H1 (cell line): ENCODE measurements at regions of chr11 and their contacts with region 1.

Region 1: DNA sequence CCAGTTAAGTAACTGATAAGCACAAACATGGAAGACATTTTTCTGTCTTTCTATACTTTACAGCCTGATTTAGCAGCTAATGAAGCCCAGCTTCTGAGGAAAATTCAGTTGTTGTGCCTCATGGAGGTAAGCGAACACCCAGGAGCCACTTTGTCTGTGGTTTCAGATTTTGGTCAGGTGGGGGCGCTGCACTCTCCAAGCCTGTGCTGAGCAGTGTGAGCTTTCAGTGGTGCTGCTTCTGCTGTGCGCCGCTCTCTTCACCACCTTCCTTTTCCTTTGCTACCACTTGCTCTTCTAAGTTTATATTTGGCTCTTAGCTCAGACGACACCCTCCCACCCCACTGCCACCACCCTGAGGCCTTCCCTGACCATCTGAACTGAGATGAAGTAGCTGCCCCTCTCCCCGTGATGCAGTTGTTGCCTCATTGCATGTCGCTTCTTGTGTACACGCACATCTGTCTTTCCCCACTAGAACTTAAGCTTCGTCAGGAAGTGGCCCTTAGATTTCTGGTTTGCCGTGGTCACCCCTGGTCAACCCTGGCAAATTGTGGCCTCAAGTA is 14.0 kb downstream of the PSMD13 start:
- DNase-seq: peak; percentile 51 to 94
- H3K4me3 ChIP-seq: no peak overlapping the region
- H3K27ac ChIP-seq: no peak overlapping the region
- H3K4me1 ChIP-seq: no peaks in the 10 kb centered on the region
- H3K27me3 ChIP-seq: no peaks in the 10 kb centered on the region; a peak in 1 of 7 replicates
- CTCF ChIP-seq: peak; percentile 82 to 94 (median 85)
- EP300 ChIP-seq: no peak
- POLR2A ChIP-seq: no peak
- RAD21 ChIP-seq: peak; percentile 86 to 88

Region 2: DNA sequence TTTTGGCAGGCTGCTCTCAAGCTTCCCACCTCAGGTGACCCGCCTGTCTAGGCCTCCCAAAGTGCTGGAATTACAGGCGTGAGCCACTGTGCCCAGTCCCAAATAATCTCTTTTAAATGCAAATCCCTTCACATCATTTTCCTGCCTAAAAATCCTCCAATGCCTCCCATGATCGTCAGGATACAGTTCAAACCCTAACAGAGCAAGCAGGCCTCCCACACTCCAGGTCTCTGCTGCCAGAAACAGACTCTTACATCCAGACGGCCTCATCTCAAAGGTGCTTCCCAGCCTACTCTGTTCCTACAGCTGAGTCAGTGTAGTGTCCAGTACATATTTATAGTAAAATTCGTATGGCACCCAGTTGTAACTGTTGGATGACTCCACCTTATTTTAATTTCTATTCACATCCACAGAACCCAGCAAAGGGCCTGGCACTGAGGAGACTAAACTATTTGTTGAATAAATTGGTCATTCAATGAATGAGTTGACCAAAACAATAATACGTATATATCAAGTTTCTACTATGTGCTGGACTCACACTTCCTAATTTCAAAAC is 22.9 kb before region 1 on chr11:
- CTCF ChIA-PET with region 1: interaction called, 18 read pairs
- POLR2A ChIA-PET with region 1: no interaction called
- DNase-seq: no peak
- H3K4me3 ChIP-seq: no peak overlapping the region
- H3K27ac ChIP-seq: no peak overlapping the region
- H3K4me1 ChIP-seq: no peaks in the 10 kb centered on the region
- H3K27me3 ChIP-seq: no peaks in the 10 kb centered on the region
- CTCF ChIP-seq: no peak
- EP300 ChIP-seq: no peak
- POLR2A ChIP-seq: no peak
- RAD21 ChIP-seq: no peak

Region 3: GRCh38 chr11:269146-269890 is 18.5 kb after region 1 on chr11:
- CTCF ChIA-PET with region 1: interaction called, 36 read pairs
- POLR2A ChIA-PET with region 1: interaction called, 9 read pairs
- DNase-seq: no peak
- H3K4me3 ChIP-seq: peak overlapping the region in 1 of 4 experiments; percentile 1; a peak in 1 of 8 replicates
- H3K27ac ChIP-seq: no peak overlapping the region; the same call in 1 of the 2 replicates
- H3K4me1 ChIP-seq: peaks cover 4 to 20% (median 13%) of the 10 kb centered on the region in 4 experiments
- H3K27me3 ChIP-seq: no peaks in the 10 kb centered on the region
- CTCF ChIP-seq: no peak
- EP300 ChIP-seq: no peak
- POLR2A ChIP-seq: no peak
- RAD21 ChIP-seq: no peak

Region 4: GRCh38 chr11:293847-294661 is 43.2 kb after region 1 on chr11:
- CTCF ChIA-PET with region 1: interaction called, 30 read pairs
- POLR2A ChIA-PET with region 1: interaction called, 4 read pairs
- DNase-seq: no peak
- H3K4me3 ChIP-seq: no peak overlapping the region
- H3K27ac ChIP-seq: no peak overlapping the region
- H3K4me1 ChIP-seq: peaks cover 0 to 34% (median 24%) of the 10 kb centered on the region in 4 experiments; a peak in 6 of 7 replicates
- H3K27me3 ChIP-seq: no peaks in the 10 kb centered on the region
- CTCF ChIP-seq: no peak
- EP300 ChIP-seq: no peak
- POLR2A ChIP-seq: no peak
- RAD21 ChIP-seq: no peak

Region 5: GRCh38 chr11:313787-314547 is 63.1 kb after region 1 on chr11 and contains the start of gene IFITM1:
- CTCF ChIA-PET with region 1: interaction called, 33 read pairs
- POLR2A ChIA-PET with region 1: interaction called, 8 read pairs
- DNase-seq: peak in 1 of 2 experiments; percentile 57
- H3K4me3 ChIP-seq: peak within 1 kb of the TSS; percentile 71 to 94 (median 86)
- H3K27ac ChIP-seq: peak within 1 kb of the TSS; percentile 43; the same call in 1 of the 2 replicates
- H3K4me1 ChIP-seq: peaks cover 9 to 41% (median 31%) of the 10 kb centered on the region in 4 experiments
- H3K27me3 ChIP-seq: no peaks in the 10 kb centered on the region
- CTCF ChIP-seq: no peak
- EP300 ChIP-seq: no peak
- POLR2A ChIP-seq: no peak
- RAD21 ChIP-seq: no peak
- total RNA-seq, gene IFITM1: 394 and 417 TPM in 2 replicates

Region 6: DNA sequence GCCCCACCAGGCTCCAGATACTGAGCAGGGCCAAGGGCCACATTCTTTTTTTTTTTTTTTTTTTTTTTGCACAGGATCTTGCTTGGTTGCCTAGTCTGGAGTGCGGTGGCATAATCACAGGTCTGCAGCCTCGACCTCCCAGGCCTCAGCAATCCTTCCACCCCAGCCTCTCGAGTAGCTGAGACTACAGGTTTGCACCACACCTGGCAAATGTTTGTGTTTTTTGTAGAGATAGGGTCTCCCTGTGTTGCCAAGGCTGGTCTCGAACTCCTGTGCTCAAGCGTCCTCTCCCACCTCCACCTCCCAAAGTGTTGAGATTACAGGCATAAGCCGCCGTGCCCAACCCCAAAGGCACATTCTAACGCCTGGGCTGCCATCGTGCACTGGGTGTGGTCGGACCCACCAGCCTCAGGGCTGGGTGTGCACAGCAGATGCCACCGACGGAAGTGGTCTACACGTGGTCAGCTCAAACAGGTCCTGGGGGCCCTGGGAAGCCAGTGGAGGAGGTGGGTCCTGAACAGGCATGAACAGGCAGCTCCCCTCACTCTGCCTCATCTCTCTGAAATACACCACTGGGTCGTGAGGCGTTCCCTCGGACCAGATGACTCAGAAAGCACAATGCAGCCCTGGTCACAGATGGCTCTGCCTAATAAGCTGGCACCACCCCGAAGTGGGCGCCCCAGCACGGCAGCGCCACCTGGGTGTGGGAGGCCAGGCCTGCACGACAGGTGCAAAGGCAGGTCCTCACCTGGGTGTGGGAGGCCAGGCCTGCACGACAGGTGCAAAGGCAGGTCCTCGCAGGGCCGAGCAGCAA is 113.3 kb after region 1 on chr11:
- CTCF ChIA-PET with region 1: interaction called, 212 read pairs
- POLR2A ChIA-PET with region 1: interaction called, 8 read pairs
- DNase-seq: peak; percentile 51 to 89
- H3K4me3 ChIP-seq: no peak overlapping the region
- H3K27ac ChIP-seq: no peak overlapping the region
- H3K4me1 ChIP-seq: peaks cover 0 to 10% (median 5%) of the 10 kb centered on the region in 4 experiments; a peak in 5 of 7 replicates
- H3K27me3 ChIP-seq: peaks cover 0 to 5% (median 2%) of the 10 kb centered on the region in 4 experiments; a peak in 1 of 7 replicates
- CTCF ChIP-seq: peak in 2 of 3 experiments; percentile 86 to 93; a peak in 3 of 4 replicates
- EP300 ChIP-seq: no peak
- POLR2A ChIP-seq: no peak; a peak in 1 of 3 replicates
- RAD21 ChIP-seq: peak; percentile 57 to 70

Region 7: GRCh38 chr11:629237-629583 is 378.4 kb after region 1 on chr11:
- CTCF ChIA-PET with region 1: no interaction called
- POLR2A ChIA-PET with region 1: no interaction called
- DNase-seq: peak in 1 of 2 experiments; percentile 46
- H3K4me3 ChIP-seq: no peak overlapping the region
- H3K27ac ChIP-seq: no peak overlapping the region
- H3K4me1 ChIP-seq: peaks cover 0 to 6% (median under 1%) of the 10 kb centered on the region in 4 experiments; a peak in 2 of 7 replicates
- H3K27me3 ChIP-seq: peaks cover 3 to 14% (median 10%) of the 10 kb centered on the region in 4 experiments; a peak in 6 of 7 replicates
- CTCF ChIP-seq: peak; percentile 5 to 25 (median 14); a peak in 2 of 4 replicates
- EP300 ChIP-seq: no peak
- POLR2A ChIP-seq: no peak
- RAD21 ChIP-seq: peak in 1 of 2 experiments; percentile 37; a peak in 3 of 4 replicates

Region 8: DNA sequence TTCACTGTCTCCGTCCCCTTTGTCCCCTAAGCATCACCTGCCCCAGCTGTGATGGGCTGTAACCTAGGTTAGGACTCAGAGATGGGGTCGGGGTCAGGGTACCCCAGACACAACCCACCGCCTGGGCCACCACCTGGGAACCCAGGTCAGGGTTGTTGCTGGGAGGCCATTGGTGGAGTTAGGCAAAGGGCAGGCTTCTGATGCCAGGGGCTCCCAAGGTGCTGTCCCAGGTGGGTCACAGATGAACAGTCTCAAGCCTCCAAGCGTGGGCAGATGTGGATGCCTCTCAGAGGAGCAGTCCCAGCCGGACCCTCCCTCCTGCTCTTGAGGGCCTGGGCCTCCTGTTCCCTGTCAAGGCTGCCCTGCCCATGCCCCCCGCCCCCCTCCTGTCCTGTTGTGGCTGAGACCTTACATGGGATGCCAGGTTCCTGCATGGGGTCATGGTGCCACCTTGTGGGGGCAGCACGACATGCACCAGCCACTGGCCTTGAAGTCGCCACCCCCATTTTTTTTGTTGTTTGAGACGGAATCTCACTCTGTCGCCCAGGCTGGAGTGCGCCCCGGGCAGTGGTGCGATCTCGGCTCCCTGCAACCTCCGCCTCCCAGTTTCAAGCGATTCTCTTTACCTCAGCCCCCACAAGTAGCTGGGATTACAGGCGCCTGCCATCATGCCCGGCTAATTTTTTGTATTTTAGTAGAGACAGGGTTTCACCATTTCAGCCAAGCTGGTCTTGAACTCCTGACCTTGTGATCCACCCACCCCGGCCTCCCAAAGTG is 514.4 kb after region 1 on chr11:
- CTCF ChIA-PET with region 1: no interaction called
- POLR2A ChIA-PET with region 1: no interaction called
- DNase-seq: peak in 1 of 2 experiments; percentile 87
- H3K4me3 ChIP-seq: no peak overlapping the region
- H3K27ac ChIP-seq: no peak overlapping the region
- H3K4me1 ChIP-seq: peaks cover 0 to 12% (median 7%) of the 10 kb centered on the region in 4 experiments; a peak in 6 of 7 replicates
- H3K27me3 ChIP-seq: no peaks in the 10 kb centered on the region
- CTCF ChIP-seq: peak; percentile 66 to 94 (median 82)
- EP300 ChIP-seq: no peak
- POLR2A ChIP-seq: peak in 1 of 2 experiments; percentile 60; a peak in 1 of 3 replicates
- RAD21 ChIP-seq: peak; percentile 86 to 87